Activated CD4-positive, alpha-beta T cell treated with anti-CD3 and anti-CD28 coated beads for 36 hours (primary cell): ENCODE measurements at regions of chr2 and their contacts with region 1.

Region 1: DNA sequence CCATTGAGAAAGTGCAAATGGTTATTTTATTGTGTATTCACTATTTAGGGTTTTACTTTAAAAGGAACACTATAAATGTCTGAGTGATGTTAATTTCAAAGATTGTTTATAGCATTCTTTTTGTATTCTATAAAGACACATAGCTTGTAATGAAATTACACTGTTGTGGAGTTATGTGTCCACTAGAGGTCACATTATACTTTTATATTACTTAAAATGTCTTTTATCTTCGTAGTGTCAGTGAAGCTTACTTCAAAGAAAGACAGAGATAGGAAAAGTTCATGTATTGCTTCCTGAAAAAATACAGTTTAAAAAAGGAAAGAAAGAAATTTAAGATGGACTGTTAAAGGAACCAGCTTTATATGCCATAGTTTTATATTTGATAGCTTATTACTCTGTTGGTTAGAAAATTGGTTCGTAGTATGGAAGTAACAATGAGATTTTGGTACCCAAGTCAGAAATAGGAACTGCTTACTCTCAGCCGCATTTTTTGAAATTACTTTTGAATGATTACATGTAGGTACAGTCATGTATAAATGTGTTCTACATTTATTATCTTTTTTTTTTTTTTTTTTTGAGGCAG is 20.5 kb downstream of the APLF start:
- DNase-seq: no peak
- ATAC-seq: no peak
- H3K4me3 Mint-ChIP-seq: no peak overlapping the region
- H3K27ac Mint-ChIP-seq: no peak overlapping the region
- H3K4me1 Mint-ChIP-seq: peaks cover 3% of the 10 kb centered on the region
- H3K27me3 Mint-ChIP-seq: no peaks in the 10 kb centered on the region

Region 2: DNA sequence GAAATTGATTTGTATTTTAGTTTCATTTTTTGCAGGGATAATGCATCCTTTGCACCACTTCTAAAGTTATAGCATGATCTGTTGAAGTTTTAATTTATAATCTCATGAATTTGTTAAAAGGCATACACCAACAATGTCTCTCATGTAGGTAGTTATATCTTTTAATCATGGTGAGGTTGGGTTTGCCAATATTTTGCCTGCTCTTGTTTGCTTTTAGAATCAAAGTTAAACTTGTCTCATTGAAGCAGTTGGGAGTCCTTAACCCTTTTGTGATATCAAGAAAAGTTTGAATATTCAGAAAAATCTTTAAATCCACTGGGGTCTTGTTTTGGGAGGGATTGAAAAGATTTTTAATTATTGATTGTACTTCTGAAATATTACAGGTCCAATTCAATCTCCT is 11.3 kb after region 1 on chr2:
- CTCF ChIA-PET with region 1: interaction called, 12 read pairs
- POLR2A ChIA-PET with region 1: no interaction called
- intact Hi-C with region 1: no loop called
- DNase-seq: no peak
- ATAC-seq: no peak
- H3K4me3 Mint-ChIP-seq: no peak overlapping the region
- H3K27ac Mint-ChIP-seq: no peak overlapping the region
- H3K4me1 Mint-ChIP-seq: no peaks in the 10 kb centered on the region
- H3K27me3 Mint-ChIP-seq: no peaks in the 10 kb centered on the region

Region 3: DNA sequence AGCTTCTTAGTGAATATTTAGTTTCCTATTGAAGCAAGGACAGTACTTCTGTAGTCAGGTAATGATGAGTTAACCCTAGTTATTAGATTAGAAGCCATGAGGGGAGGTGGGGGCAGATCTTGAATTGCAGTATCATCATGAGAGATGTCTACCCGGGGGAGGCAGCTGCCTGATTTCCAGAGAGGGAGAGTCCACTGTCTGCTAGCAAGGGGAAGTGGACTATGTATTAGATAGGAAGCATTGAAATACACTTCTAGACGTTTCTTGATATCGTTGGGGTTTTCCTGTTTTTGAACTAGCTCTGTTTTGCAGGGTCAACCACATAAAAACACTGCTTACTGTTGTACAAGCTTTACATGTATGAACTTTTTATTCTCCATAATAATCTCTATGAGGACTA is 18.3 kb after region 1 on chr2:
- CTCF ChIA-PET with region 1: interaction called, 10 read pairs
- POLR2A ChIA-PET with region 1: no interaction called
- intact Hi-C with region 1: no loop called
- DNase-seq: no peak
- ATAC-seq: no peak
- H3K4me3 Mint-ChIP-seq: no peak overlapping the region
- H3K27ac Mint-ChIP-seq: no peak overlapping the region
- H3K4me1 Mint-ChIP-seq: peaks cover 11% of the 10 kb centered on the region
- H3K27me3 Mint-ChIP-seq: no peaks in the 10 kb centered on the region

Region 4: DNA sequence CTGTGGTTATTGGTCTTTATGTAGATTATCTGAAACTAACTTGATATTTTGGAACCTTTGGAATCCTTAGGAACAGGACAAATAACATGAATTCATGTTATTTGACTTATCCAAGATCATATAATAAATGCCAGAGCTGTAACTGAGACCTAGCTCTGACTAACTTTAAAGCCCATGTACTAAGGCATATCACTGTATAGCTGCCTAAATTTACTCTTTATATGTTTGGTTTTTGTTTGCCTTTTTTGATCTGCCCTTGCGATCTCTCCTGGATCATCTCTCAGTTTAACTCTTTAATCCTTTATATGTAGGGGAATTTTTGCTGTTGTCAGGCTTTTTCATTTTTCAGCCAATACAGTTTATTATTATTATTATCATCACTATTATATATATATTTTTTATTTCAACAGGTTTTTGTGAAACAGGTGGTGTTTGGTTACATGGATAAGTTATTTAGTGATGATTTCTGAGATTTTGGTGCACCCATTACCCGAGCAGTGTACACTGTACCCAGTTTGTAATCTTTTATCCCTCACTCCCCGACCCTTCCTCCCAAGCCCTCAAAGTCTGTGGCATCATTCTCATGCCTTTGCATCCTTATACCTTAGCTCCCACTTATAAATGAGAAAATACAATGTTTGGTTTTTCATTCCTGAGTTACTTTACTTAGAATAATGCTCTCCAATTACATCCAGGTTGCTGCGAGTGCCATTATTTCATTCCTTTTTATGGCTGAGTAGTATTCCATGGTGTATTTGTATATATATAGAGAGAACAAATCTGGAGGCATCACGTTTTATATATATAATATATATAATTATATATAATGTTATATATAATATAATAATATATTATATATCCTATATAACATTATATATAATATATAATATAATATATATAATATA is 28.4 kb after region 1 on chr2:
- CTCF ChIA-PET with region 1: interaction called, 3 read pairs
- POLR2A ChIA-PET with region 1: no interaction called
- intact Hi-C with region 1: loop called in 1 of 2 experiments (anchors 2 kb)
- DNase-seq: no peak
- ATAC-seq: peak; percentile 52
- H3K4me3 Mint-ChIP-seq: no peak overlapping the region
- H3K27ac Mint-ChIP-seq: no peak overlapping the region
- H3K4me1 Mint-ChIP-seq: peaks cover 7% of the 10 kb centered on the region
- H3K27me3 Mint-ChIP-seq: no peaks in the 10 kb centered on the region

Region 5: GRCh38 chr2:68594674-68595492 is 107.0 kb after region 1 on chr2:
- CTCF ChIA-PET with region 1: interaction called, 16 read pairs
- POLR2A ChIA-PET with region 1: no interaction called
- intact Hi-C with region 1: loop called in 1 of 2 experiments (anchors 2 kb)
- DNase-seq: peak; percentile 72
- ATAC-seq: peak; percentile 49
- H3K4me3 Mint-ChIP-seq: no peak overlapping the region
- H3K27ac Mint-ChIP-seq: no peak overlapping the region
- H3K4me1 Mint-ChIP-seq: peaks cover 6% of the 10 kb centered on the region
- H3K27me3 Mint-ChIP-seq: peaks cover 9% of the 10 kb centered on the region

Region 6: DNA sequence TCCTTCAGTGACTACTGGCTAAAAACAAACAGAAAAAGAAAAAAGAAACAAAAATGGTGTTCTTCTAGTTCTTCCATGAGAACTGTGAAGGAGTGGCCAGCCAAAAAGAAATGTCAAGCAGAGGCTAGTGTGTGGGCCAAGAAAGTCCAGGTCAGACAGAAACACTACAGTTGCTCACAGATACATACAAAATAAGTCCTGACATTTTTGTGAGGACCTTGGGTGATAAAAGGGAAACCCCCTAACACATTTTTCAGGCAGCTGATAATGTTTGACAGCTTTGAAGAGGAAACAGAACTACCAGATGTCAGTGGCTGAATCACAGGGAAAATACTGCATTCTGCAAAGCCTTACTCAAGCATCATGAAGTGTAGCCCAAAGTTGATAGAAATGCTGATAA is 274.8 kb after region 1 on chr2:
- CTCF ChIA-PET with region 1: no interaction called
- POLR2A ChIA-PET with region 1: no interaction called
- intact Hi-C with region 1: no loop called
- DNase-seq: no peak
- ATAC-seq: peak; percentile 33
- H3K4me3 Mint-ChIP-seq: peak overlapping the region; percentile 38
- H3K27ac Mint-ChIP-seq: peak overlapping the region; percentile 83
- H3K4me1 Mint-ChIP-seq: peaks cover 96% of the 10 kb centered on the region
- H3K27me3 Mint-ChIP-seq: no peaks in the 10 kb centered on the region